ENCODE measurements at regions of chr11 and their contacts with region 1.

Region 1: GRCh38 chr11:126862664-126863243 is 137.8 kb downstream of the KIRREL3 start:
- DNase-seq: no peak
- H3K4me3 ChIP-seq: no peak overlapping the region
- H3K27ac ChIP-seq: no peak overlapping the region
- H3K27me3 ChIP-seq: no peaks in the 10 kb centered on the region
- CTCF ChIP-seq: no peak

Region 2: DNA sequence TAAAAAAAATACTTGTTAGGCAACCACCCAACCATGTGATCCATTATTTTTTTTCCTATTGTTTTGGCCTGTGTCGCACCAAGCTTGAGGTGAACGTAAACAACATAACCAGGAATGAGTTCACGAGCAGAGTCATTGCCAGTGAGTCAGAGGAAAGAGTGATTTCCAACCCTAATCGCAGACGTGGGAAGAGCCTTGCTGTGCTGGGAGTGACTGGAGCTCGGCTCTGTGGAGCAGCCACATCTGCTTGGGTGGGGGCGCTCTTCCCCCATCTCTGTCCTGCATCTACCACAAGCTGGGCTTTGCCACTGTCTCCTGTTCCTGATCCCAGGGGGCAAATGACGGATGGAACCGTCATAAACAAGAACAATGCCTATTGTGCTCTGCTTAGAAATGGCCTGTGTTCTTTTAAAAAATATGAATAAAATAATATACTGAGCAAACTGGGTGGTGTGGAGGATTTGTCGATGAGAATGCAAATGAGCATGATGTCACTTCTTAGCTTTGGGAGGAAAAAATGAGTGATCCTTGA is 72.1 kb before region 1 on chr11:
- CTCF ChIA-PET with region 1: interaction called, 10 read pairs
- POLR2A ChIA-PET with region 1: no interaction called
- DNase-seq: peak; percentile 88
- H3K4me3 ChIP-seq: no peak overlapping the region
- H3K27ac ChIP-seq: peak overlapping the region; percentile 52
- H3K27me3 ChIP-seq: no peaks in the 10 kb centered on the region
- CTCF ChIP-seq: peak; percentile 49

Region 3: DNA sequence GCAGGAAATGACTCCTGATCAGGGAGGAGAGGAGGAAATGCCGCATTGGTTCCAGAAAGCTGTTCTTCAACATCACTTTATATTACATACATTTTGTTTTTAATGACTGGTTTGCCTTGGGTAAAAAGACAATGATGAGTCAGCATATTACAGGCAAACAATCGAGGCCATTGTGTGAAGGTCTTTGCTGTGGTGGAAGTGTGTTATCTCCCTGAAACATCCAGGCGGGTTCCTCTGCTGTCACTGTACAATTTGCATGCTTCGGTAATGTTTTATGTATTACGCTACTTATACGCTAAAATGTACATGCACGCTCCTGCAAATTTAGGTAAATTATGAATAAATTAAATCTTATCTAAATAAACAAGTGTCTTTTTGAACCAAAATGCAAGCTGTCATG is 23.3 kb before region 1 on chr11:
- CTCF ChIA-PET with region 1: no interaction called
- POLR2A ChIA-PET with region 1: no interaction called
- DNase-seq: no peak
- H3K4me3 ChIP-seq: no peak overlapping the region
- H3K27ac ChIP-seq: no peak overlapping the region
- H3K27me3 ChIP-seq: no peaks in the 10 kb centered on the region
- CTCF ChIP-seq: no peak

Region 4: GRCh38 chr11:126874831-126875230 is 12.1 kb after region 1 on chr11:
- CTCF ChIA-PET with region 1: no interaction called
- POLR2A ChIA-PET with region 1: no interaction called
- DNase-seq: no peak
- H3K4me3 ChIP-seq: no peak overlapping the region
- H3K27ac ChIP-seq: no peak overlapping the region
- H3K27me3 ChIP-seq: no peaks in the 10 kb centered on the region
- CTCF ChIP-seq: no peak

Measured in AG04450 (cell line).